Left ventricle myocardium inferior (tissue), 1 donor: ENCODE measurements at regions of chr5 and their contacts with region 1.

Region 1: DNA sequence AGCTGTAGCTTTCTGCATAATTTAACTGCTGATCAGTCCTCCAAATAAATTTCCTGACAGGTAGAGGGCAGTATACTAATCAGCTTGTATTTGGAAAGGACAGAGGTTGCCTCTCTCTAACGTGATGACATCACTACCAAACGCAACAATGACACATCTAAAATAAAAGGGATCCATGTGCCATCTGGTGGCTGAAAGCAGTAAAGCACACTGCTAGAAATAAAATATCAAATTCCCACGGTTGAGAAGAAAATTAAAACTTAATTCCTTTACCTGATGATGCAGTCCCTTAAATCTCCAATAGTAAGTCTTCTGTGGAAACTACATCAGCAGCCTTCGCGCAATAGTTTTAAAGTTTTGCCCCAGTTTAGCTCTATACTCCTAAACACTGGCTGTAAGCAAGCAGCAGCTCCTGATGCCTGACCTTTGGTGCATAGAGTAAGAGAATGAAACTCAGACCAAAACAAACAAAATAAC is 54.5 kb downstream of the DIAPH1 start:
- DNase-seq: no peak
- H3K4me3 ChIP-seq: no peak overlapping the region
- H3K27ac ChIP-seq: peak overlapping the region; percentile 76
- H3K4me1 ChIP-seq: peaks cover 39% of the 10 kb centered on the region
- H3K27me3 ChIP-seq: no peaks in the 10 kb centered on the region
- CTCF ChIP-seq: peak; percentile 97

Region 2: GRCh38 chr5:141330299-141331080 is 233.8 kb before region 1 on chr5 and contains the start of gene PCDHGA1:
- intact Hi-C with region 1: loop called (anchors 10 kb)
- DNase-seq: no peak
- H3K4me3 ChIP-seq: peak within 1 kb of the TSS; percentile 55
- H3K27ac ChIP-seq: peak within 1 kb of the TSS; percentile 54
- H3K4me1 ChIP-seq: peaks cover 23% of the 10 kb centered on the region
- H3K27me3 ChIP-seq: no peaks in the 10 kb centered on the region
- CTCF ChIP-seq: peak; percentile 65
- total RNA-seq, gene PCDHGA1: 3.1 TPM

Region 3: DNA sequence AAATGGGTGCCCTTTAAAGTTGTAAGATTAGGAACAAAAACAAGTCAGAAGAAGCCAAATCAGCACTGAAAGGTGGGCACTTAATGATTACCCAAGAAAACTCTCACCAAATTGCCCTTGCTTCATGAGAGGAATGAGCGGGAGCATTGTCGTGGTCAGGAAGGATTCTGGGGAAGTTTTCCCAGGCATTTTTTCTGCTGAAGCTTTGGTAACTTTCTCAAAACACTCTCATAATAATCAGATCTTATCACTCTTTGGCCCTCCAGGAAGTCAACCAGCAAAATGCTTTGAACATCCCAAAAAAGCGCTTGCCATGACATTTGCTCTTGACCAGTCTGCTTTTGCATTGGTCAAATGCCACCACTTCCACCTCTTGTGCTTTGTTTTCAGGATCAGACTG is 98.9 kb before region 1 on chr5:
- intact Hi-C with region 1: no loop called
- DNase-seq: no peak
- H3K4me3 ChIP-seq: no peak overlapping the region
- H3K27ac ChIP-seq: no peak overlapping the region
- H3K4me1 ChIP-seq: no peaks in the 10 kb centered on the region
- H3K27me3 ChIP-seq: no peaks in the 10 kb centered on the region
- CTCF ChIP-seq: no peak